Activated T-helper 1 cell treated with anti-CD3 and anti-CD28 coated beads, Interleukin-12 subunit alpha, Interleukin-12 subunit beta, Interleukin-2, Interleukin-4 antibody, amounts not matched to agents 30 ng/mL and 10 ng/mL and 1 ng/mL, durations not matched to agents 14 hours and 24 hours and 36 hours (primary cell): ENCODE measurements at regions of chr11 and their contacts with region 1.

Region 1: DNA sequence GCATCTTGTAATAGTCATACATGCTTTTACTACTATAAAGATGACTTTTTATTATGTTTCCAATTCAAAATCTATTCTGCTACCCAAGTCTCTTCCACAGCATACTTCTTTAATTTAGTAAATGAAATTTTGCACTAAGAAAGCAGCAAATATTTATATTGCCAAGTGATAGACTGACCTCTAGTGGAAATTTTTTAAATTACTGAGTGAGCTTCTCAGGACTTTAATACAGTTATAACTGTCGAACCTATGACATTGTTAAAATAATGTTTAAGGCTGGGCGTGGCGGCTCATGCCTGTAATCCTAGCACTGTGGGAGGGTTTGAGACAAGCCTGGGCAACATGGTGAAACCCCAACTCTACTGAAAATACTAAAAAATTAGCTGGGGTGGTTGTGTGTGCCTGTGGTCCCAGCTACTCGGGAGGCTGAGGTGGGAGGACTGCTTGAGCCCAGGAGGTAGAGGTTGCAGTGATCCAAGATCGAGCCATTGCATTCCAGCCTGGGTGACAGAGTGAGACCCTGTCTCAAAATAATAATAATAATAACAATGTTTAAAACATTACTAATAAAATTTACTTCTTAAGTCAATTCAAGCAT is 27.3 kb downstream of the STK33 start:
- DNase-seq: no peak
- H3K4me3 Mint-ChIP-seq: no peak overlapping the region
- H3K27ac Mint-ChIP-seq: no peak overlapping the region
- H3K4me1 Mint-ChIP-seq: peaks cover 5% of the 10 kb centered on the region
- H3K27me3 Mint-ChIP-seq: peaks cover 31% of the 10 kb centered on the region

Region 2: GRCh38 chr11:8192016-8192895 is 374.5 kb before region 1 on chr11:
- intact Hi-C with region 1: loop called (anchors 1 kb)
- DNase-seq: no peak
- H3K4me3 Mint-ChIP-seq: no peak overlapping the region
- H3K27ac Mint-ChIP-seq: no peak overlapping the region
- H3K4me1 Mint-ChIP-seq: no peaks in the 10 kb centered on the region
- H3K27me3 Mint-ChIP-seq: peaks cover 8% of the 10 kb centered on the region

Region 3: GRCh38 chr11:8225589-8226036 is 341.1 kb before region 1 on chr11:
- intact Hi-C with region 1: loop called (anchors 1 kb)
- DNase-seq: peak; percentile 40
- H3K4me3 Mint-ChIP-seq: no peak overlapping the region
- H3K27ac Mint-ChIP-seq: peak overlapping the region; percentile 47
- H3K4me1 Mint-ChIP-seq: peaks cover 16% of the 10 kb centered on the region
- H3K27me3 Mint-ChIP-seq: peaks cover 12% of the 10 kb centered on the region

Region 4: GRCh38 chr11:8328848-8329330 is 237.8 kb before region 1 on chr11:
- intact Hi-C with region 1: loop called (anchors 2 kb)
- DNase-seq: peak; percentile 42
- H3K4me3 Mint-ChIP-seq: no peak overlapping the region
- H3K27ac Mint-ChIP-seq: no peak overlapping the region
- H3K4me1 Mint-ChIP-seq: no peaks in the 10 kb centered on the region
- H3K27me3 Mint-ChIP-seq: peaks cover 6% of the 10 kb centered on the region